HCT116 (cell line): ENCODE measurements at regions of chr4 and their contacts with region 1.

Region 1: DNA sequence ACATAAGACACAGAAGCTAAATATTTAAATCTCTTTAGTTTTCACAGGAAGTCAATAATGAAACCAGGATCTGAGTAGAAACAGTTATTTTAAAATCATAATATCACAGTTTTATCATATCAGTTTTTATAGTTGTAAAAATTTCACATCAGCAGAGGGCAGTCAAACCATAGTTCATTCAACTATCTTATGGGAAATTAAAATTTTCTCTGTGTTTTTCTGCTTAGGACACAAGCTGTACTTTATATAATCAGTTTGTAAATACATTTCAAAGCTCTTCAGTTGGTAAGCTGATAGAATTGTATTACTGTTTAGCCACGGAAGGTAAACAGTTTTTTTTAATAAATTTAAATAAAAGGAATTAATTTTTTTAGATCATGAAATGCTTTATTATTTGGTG is 204.8 kb upstream of the NUDT6 start:
- DNase-seq: no peak
- ATAC-seq: no peak
- H3K4me3 ChIP-seq: no peak overlapping the region
- H3K27ac ChIP-seq: no peak overlapping the region
- H3K4me1 ChIP-seq: no peaks in the 10 kb centered on the region
- H3K27me3 ChIP-seq: no peaks in the 10 kb centered on the region
- CTCF ChIP-seq: peak in 1 of 3 experiments; percentile 29; a peak in 2 of 6 replicates
- POLR2A ChIP-seq: no peak
- RAD21 ChIP-seq: peak; percentile 51

Region 2: DNA sequence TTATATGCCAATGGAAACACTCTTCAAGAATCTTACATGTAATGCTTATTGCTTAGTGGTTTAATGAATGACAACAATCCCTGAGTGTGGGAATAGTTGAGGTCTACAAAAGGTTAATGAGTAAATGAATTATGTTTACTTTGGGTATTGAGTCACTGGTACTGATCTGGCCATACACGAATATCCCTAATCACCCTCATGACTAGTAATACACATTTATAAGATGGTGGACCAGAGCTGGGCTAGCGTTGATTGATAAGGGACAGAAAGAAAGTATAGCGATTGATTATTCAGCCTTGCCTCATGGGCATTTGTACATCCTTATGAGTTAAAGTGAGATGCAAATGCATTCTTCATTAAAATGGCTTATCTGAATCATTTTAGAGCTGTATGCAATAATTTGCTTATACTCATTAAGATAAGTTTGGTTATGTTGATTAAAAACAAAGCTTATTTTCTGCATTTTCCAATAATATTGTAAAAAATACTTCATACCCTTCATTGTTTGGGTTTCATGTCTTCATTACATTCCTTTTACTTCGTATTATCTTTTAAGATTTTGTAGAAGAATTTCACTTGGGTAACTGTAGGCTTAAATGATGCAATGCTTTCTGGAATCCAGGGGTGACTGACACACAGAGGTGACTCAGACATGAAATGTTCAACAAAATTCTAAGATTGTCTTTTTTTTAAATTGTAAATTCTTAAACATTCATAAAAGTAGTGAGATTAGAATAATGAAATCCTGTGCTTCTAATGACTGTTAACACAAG is 253.2 kb before region 1 on chr4:
- CTCF ChIA-PET with region 1: no interaction called
- POLR2A ChIA-PET with region 1: no interaction called
- RAD21 ChIA-PET with region 1: no interaction called
- intact Hi-C with region 1: no loop called
- DNase-seq: no peak
- ATAC-seq: no peak; the same call in 1 of the 2 replicates
- H3K4me3 ChIP-seq: no peak overlapping the region
- H3K27ac ChIP-seq: no peak overlapping the region
- H3K4me1 ChIP-seq: peaks cover 0 to 11% of the 10 kb centered on the region in 2 experiments; a peak in 2 of 4 replicates
- H3K27me3 ChIP-seq: no peaks in the 10 kb centered on the region
- CTCF ChIP-seq: no peak
- POLR2A ChIP-seq: no peak
- RAD21 ChIP-seq: no peak

Region 3: GRCh38 chr4:123380728-123381716 is 253.8 kb after region 1 on chr4:
- CTCF ChIA-PET with region 1: no interaction called
- POLR2A ChIA-PET with region 1: no interaction called
- RAD21 ChIA-PET with region 1: no interaction called
- intact Hi-C with region 1: loop called (anchors 10 kb)
- DNase-seq: no peak
- ATAC-seq: no peak
- H3K4me3 ChIP-seq: no peak overlapping the region
- H3K27ac ChIP-seq: no peak overlapping the region
- H3K4me1 ChIP-seq: no peaks in the 10 kb centered on the region
- H3K27me3 ChIP-seq: no peaks in the 10 kb centered on the region
- CTCF ChIP-seq: no peak
- POLR2A ChIP-seq: no peak
- RAD21 ChIP-seq: no peak

Region 4: GRCh38 chr4:123661080-123661737 is 534.0 kb after region 1 on chr4:
- CTCF ChIA-PET with region 1: interaction called, 3 read pairs
- POLR2A ChIA-PET with region 1: no interaction called
- RAD21 ChIA-PET with region 1: no interaction called
- intact Hi-C with region 1: loop called (anchors 1 kb)
- DNase-seq: peak; percentile 21
- ATAC-seq: no peak
- H3K4me3 ChIP-seq: no peak overlapping the region
- H3K27ac ChIP-seq: no peak overlapping the region
- H3K4me1 ChIP-seq: no peaks in the 10 kb centered on the region
- H3K27me3 ChIP-seq: no peaks in the 10 kb centered on the region
- CTCF ChIP-seq: peak; percentile 54 to 73 (median 65); a peak in 5 of 6 replicates
- POLR2A ChIP-seq: no peak
- RAD21 ChIP-seq: peak; percentile 74